Activated naive CD4-positive, alpha-beta T cell treated with anti-CD3 and anti-CD28 coated beads for 36 hours (primary cell): ENCODE measurements at regions of chr2 and their contacts with region 1.

Region 1: GRCh38 chr2:238784671-238785527 is 63.0 kb upstream of the TWIST2 start:
- DNase-seq: peak; percentile 78
- H3K4me3 Mint-ChIP-seq: no peak overlapping the region
- H3K27ac Mint-ChIP-seq: no peak overlapping the region
- H3K4me1 Mint-ChIP-seq: no peaks in the 10 kb centered on the region
- H3K27me3 Mint-ChIP-seq: peaks cover 11% of the 10 kb centered on the region

Region 2: GRCh38 chr2:238362626-238363025 is 422.3 kb before region 1 on chr2:
- CTCF ChIA-PET with region 1: no interaction called
- intact Hi-C with region 1: loop called (anchors 5 kb)
- DNase-seq: no peak
- H3K4me3 Mint-ChIP-seq: no peak overlapping the region
- H3K27ac Mint-ChIP-seq: no peak overlapping the region
- H3K4me1 Mint-ChIP-seq: no peaks in the 10 kb centered on the region
- H3K27me3 Mint-ChIP-seq: no peaks in the 10 kb centered on the region

Region 3: GRCh38 chr2:238370823-238371372 is 414.0 kb before region 1 on chr2:
- CTCF ChIA-PET with region 1: interaction called, 11 read pairs
- intact Hi-C with region 1: loop called (anchors 1 kb)
- DNase-seq: peak; percentile 76
- H3K4me3 Mint-ChIP-seq: no peak overlapping the region
- H3K27ac Mint-ChIP-seq: no peak overlapping the region
- H3K4me1 Mint-ChIP-seq: peaks cover 5% of the 10 kb centered on the region
- H3K27me3 Mint-ChIP-seq: no peaks in the 10 kb centered on the region

Region 4: DNA sequence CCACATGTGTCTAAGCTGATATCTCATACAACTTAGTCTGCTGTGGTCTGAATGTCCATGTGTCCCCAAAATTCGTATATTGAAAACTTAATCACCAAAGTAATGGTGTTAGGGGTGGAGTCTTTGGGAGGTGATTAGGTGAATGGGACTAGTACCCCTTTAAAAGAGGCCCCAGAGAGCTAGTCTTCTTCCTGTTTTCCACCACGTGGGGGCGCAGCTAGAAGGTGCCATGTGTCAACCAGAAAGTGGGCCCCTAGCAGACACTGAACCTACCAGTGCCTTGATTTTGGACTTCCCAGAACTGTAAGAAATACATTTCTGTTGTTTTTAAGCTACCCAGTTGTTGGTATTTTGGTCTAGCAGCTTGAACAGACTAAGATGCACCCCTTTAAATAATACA is 271.6 kb before region 1 on chr2:
- CTCF ChIA-PET with region 1: interaction called, 3 read pairs
- intact Hi-C with region 1: loop called (anchors 2 kb)
- DNase-seq: peak; percentile 58
- H3K4me3 Mint-ChIP-seq: no peak overlapping the region
- H3K27ac Mint-ChIP-seq: no peak overlapping the region
- H3K4me1 Mint-ChIP-seq: no peaks in the 10 kb centered on the region
- H3K27me3 Mint-ChIP-seq: no peaks in the 10 kb centered on the region

Region 5: GRCh38 chr2:238720232-238720672 is 64.6 kb before region 1 on chr2:
- CTCF ChIA-PET with region 1: interaction called, 3 read pairs
- intact Hi-C with region 1: loop called (anchors 1 kb)
- DNase-seq: peak; percentile 75
- H3K4me3 Mint-ChIP-seq: no peak overlapping the region
- H3K27ac Mint-ChIP-seq: no peak overlapping the region
- H3K4me1 Mint-ChIP-seq: no peaks in the 10 kb centered on the region
- H3K27me3 Mint-ChIP-seq: peaks cover 29% of the 10 kb centered on the region

Region 6: DNA sequence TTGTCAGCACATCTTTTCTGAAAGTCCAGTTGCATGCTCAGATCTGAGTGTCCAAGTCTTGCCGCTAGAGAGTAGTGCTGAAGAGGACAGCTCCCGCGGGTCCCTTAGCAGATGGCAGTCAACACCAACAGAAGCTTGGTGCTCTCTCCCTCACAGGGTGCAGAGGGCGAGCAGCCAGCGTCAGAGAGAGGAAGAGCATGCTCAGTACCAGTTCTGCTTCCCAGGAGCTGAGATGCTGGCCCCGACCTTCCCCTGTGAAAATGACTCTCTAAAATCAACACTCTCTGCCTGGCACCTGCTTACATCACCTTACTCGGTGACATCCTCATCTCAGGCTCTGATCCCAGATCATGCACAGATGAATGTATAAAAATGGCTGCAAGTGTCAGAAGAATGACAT is 23.0 kb before region 1 on chr2:
- CTCF ChIA-PET with region 1: no interaction called
- intact Hi-C with region 1: no loop called
- DNase-seq: peak; percentile 17
- H3K4me3 Mint-ChIP-seq: no peak overlapping the region
- H3K27ac Mint-ChIP-seq: no peak overlapping the region
- H3K4me1 Mint-ChIP-seq: no peaks in the 10 kb centered on the region
- H3K27me3 Mint-ChIP-seq: peaks cover 28% of the 10 kb centered on the region

Region 7: GRCh38 chr2:239002954-239003588 is 218.2 kb after region 1 on chr2:
- CTCF ChIA-PET with region 1: no interaction called
- intact Hi-C with region 1: no loop called
- DNase-seq: no peak
- H3K4me3 Mint-ChIP-seq: no peak overlapping the region
- H3K27ac Mint-ChIP-seq: no peak overlapping the region
- H3K4me1 Mint-ChIP-seq: no peaks in the 10 kb centered on the region
- H3K27me3 Mint-ChIP-seq: peaks cover 13% of the 10 kb centered on the region

Region 8: DNA sequence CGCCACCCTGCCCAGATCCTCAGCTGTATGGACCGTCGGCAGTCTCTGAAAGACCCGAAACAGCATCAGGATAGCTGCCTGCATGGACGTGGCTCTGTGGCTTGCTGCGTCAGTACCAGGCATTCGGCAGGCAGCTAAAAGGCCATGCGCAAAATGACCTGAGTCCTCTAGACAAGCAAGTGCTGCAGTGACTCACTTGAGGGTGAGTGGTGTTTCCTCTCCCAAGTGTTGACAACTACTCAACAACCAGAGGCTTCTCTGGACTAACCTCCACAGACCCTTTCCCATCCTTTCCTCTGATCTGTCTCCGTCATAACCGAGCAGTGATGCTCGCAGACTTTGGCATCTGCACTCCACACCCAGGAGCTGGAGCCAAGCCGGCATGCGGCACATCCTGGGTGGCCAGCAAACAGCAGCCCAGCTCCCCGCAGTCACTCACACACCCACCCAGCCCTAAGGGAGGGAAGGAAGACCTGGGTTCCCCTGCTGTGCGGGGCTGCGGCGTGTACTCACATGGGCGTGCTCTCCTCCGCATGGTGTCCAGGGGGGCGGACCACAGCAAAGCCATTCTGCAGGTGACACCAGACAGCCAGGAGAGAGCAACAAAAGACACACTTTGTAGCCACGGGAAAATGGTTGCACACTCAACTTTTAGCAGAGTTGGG is 302.3 kb after region 1 on chr2:
- CTCF ChIA-PET with region 1: no interaction called
- intact Hi-C with region 1: no loop called
- DNase-seq: no peak
- H3K4me3 Mint-ChIP-seq: no peak overlapping the region
- H3K27ac Mint-ChIP-seq: no peak overlapping the region
- H3K4me1 Mint-ChIP-seq: no peaks in the 10 kb centered on the region
- H3K27me3 Mint-ChIP-seq: no peaks in the 10 kb centered on the region